Esophagus muscularis mucosa (tissue), 4 donors: ENCODE measurements at regions of chr19 and their contacts with region 1.

Region 1: DNA sequence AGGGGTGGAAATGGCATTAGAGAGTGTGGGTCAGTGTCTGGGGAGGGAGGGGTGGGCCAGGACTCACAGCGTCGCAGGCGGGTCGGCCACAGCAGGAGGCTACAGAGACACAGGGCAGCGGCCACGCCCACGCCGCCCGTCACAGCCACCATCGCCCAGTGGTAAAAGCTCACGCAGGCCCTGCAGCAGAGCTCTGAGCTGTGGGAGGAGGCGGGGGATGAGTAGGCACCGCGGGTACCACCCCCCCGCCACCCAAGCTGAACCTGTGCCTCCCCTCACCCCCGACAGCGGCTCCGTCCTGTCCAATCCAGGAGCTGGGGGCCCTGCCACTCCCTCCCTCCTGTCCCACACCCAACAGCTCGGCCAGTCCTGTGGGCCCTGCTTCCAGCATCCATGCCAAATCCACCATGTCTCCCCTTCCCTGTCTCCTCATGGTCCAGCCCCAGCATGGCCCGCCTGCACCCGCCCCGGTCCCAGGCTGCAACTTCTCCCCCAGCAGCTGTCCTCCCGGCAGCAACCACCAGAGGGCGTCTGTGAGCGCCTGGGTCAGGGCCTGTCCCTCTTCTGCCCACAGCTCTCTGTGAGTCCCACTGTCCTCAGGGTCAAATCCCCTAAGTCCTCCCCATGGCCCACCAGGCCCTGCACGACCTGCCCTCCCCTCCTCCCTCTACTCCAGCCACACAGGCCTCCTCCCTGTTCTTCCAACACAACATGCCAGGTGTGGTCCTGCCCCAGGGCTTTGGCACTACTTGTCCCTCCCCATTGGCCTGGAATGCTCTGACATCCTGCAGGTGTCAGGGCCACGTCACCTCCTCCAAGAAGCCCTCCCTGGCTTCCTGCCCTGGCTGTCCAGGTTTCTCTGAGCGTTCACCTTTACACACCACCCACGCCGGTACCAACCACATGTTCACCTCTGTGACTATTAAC is 6.0 kb downstream of the TEKTIP1 start:
- DNase-seq: no peak
- H3K4me3 ChIP-seq: no peak overlapping the region
- H3K27ac ChIP-seq: no peak overlapping the region
- H3K4me1 ChIP-seq: peaks cover 0 to 27% (median 11%) of the 10 kb centered on the region in 4 donors
- H3K27me3 ChIP-seq: no peaks in the 10 kb centered on the region
- CTCF ChIP-seq: peak; percentile 94 to 99 (median 95)
- EP300 ChIP-seq: no peak
- POLR2A ChIP-seq: no peak

Region 2: DNA sequence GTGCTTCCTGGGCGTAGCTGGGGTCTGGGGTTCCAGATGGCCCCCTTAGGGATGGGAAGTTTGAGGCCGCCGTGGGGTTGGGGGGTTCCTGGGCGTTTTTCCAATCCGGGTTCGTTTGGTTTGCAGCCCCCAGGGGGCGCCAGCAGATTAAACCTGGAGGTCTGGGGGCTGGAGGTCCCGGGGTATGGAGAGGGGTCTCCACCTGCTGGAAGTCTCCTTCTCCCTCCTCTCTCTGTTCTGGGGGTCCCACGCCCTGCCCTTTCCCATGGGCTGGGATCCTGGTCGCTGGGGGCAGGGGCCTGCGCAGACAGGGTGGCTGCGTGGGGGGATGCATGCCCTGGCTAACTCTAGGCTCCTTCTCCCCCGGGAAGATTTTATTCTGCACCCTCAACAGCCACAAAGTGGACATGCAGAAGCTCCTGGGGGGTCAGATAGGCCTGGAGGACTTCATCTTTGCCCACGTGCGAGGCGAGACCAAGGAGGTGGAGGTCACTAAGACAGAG is 41.2 kb after region 1 on chr19:
- intact Hi-C with region 1: no loop called
- DNase-seq: no peak
- H3K4me3 ChIP-seq: peak overlapping the region; percentile 51 to 60 (median 54)
- H3K27ac ChIP-seq: peak overlapping the region; percentile 61 to 84 (median 66)
- H3K4me1 ChIP-seq: peaks cover 14 to 27% (median 26%) of the 10 kb centered on the region in 4 donors
- H3K27me3 ChIP-seq: peaks cover 0 to 15% (median 0%) of the 10 kb centered on the region in 4 donors
- CTCF ChIP-seq: peak; percentile 55 to 64 (median 59)
- EP300 ChIP-seq: no peak
- POLR2A ChIP-seq: no peak

Region 3: DNA sequence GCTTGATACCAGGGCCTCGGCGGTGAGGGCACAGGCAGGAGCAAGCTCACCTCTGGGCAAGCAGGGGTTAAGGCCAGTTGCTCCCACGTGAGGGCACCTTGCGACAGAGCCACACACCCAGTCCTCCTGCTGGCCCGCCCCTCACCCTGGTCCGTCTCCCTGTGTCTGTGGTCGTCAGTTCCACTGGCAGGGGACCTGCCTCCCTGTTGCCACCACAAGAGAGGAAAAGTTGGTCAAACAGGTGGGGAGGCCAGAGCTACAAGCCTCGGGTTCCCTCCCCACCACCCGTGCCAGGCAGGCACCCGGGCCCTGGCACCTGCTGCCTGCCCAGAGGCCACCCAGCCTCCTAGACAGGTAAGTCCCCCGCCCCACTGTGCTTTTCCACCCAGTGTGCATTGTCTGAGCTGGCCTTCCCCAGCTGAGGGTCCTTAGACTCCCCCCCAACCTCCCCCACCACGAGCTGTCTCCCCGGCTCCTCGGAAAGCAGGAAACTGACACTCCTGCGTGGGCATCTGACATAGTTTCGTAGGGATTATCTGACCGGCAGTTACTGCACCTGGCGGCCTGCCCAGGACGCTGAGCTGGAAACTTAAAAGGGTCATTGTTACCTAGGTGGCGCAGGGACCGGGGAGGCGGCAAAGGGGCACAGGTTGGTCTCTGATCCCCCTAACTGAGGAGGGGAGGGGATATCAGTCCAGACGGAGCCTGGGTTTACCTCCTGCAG is 163.4 kb after region 1 on chr19 and contains the start of gene TJP3:
- intact Hi-C with region 1: loop called (anchors 5 kb)
- DNase-seq: no peak
- H3K4me3 ChIP-seq: no peak within 1 kb of the TSS
- H3K27ac ChIP-seq: no peak within 1 kb of the TSS
- H3K4me1 ChIP-seq: peaks cover 4 to 19% (median 13%) of the 10 kb centered on the region in 4 donors
- H3K27me3 ChIP-seq: peaks cover 0 to 19% (median 0%) of the 10 kb centered on the region in 4 donors
- CTCF ChIP-seq: no peak
- EP300 ChIP-seq: no peak
- POLR2A ChIP-seq: no peak
- total RNA-seq, gene TJP3: 0.06 to 4.2 (median 0.17) TPM in 3 of 4 donors, not detected in the other

Region 4: DNA sequence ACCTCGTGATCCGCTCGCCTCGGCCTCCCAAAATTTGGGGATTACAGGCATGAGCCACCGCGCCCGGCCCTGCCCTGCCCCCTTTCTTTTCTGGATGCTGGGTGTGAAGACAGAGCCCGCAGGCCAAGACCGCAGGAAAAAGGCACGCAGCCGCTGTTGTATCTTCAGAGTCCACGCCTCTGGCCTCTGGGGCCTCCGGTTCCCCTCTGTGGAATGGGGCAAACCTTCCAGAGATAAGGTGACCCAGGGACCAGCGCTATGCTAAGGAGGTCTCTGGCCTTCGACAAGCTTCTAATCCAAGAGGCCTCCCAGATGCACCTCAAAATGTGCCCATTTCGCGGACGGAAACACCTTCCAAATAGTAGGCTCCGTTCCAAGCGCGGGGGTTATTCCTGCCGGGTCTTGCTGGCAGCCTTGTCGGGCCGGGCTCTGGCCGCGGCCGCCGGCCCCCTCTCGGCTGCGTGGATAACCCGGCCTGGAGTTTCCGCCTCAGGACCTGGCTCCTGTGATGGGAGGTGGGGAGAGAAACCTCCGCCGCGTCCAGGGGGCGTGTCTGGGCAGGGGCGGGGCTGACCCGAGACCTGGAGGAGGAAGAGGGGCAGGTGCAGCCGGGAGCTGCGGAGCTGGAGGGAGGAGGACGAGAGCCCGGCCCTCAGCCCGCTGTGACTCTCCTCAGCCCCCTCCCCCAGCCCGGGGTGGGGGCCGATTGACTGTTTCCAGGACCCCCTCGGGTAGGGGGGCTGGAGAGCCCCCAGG is 176.3 kb after region 1 on chr19:
- intact Hi-C with region 1: no loop called
- DNase-seq: no peak
- H3K4me3 ChIP-seq: peak overlapping the region; percentile 21 to 48 (median 24)
- H3K27ac ChIP-seq: no peak overlapping the region
- H3K4me1 ChIP-seq: peaks cover 11 to 36% (median 29%) of the 10 kb centered on the region in 4 donors
- H3K27me3 ChIP-seq: peaks cover 4 to 72% (median 30%) of the 10 kb centered on the region in 4 donors
- CTCF ChIP-seq: peak in 1 of 3 experiments; percentile 39
- EP300 ChIP-seq: no peak
- POLR2A ChIP-seq: peak; percentile 48